ENCODE measurements at regions of chr11 and their contacts with region 1.

Region 1: DNA sequence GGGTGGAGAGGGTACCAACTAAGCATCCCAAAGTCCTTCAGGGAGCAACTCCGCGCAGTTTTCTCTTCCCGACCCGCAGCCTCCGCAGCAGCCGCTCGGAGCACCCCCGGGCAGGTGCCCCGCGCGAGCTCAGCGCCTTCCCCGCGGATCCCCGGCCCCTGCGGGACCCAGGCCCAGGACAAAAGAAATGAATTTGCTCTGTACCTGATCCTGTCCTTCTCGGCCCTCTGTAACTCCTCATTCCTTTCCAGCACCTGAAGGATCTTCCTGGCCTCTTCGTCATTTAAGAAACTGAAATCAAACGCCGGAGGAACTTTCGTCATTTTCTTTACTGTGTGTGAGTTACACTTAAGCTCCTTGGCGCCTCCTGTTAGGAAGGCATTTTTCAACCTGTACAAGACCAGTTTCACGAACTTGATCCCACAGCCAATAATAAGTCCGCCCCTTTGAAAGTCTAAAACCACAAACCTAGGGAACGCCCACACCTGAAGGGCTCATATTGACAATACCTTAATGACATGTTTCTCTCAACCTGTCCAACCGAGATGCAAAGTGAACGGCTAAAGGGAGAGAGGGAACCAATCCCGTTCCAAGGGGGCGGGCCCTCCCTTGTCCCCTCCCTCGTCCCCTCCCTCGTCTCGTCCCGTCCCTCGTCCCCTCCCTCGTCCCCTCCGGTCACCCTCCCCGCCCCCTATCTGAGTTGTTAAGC is at the start of gene EXPH5:
- DNase-seq: peak; percentile 92
- ATAC-seq: peak; percentile 99
- H3K4me3 Mint-ChIP-seq: peak within 1 kb of the TSS; percentile 94
- H3K27ac Mint-ChIP-seq: peak within 1 kb of the TSS; percentile 98
- H3K4me1 Mint-ChIP-seq: peaks cover 15% of the 10 kb centered on the region
- H3K27me3 Mint-ChIP-seq: peaks cover 21% of the 10 kb centered on the region
- total RNA-seq, gene EXPH5: 2.0 to 2.4 TPM

Region 2: GRCh38 chr11:108497317-108498045 is 95.9 kb before region 1 on chr11:
- CTCF ChIA-PET with region 1: no interaction called
- POLR2A ChIA-PET with region 1: interaction called, 3 read pairs
- intact Hi-C with region 1: loop called in 1 of 2 experiments (anchors 2 kb)
- DNase-seq: peak; percentile 85
- ATAC-seq: peak; percentile 91
- H3K4me3 Mint-ChIP-seq: peak overlapping the region; percentile 81
- H3K27ac Mint-ChIP-seq: peak overlapping the region; percentile 91
- H3K4me1 Mint-ChIP-seq: peaks cover 17% of the 10 kb centered on the region
- H3K27me3 Mint-ChIP-seq: no peaks in the 10 kb centered on the region

Region 3: GRCh38 chr11:108768370-108768769 is 175.0 kb after region 1 on chr11:
- CTCF ChIA-PET with region 1: no interaction called
- POLR2A ChIA-PET with region 1: no interaction called
- intact Hi-C with region 1: no loop called
- DNase-seq: no peak
- ATAC-seq: no peak
- H3K4me3 Mint-ChIP-seq: no peak overlapping the region
- H3K27ac Mint-ChIP-seq: no peak overlapping the region
- H3K4me1 Mint-ChIP-seq: peaks cover 18% of the 10 kb centered on the region
- H3K27me3 Mint-ChIP-seq: no peaks in the 10 kb centered on the region